Activated CD4-positive, alpha-beta T cell treated with anti-CD3 and anti-CD28 coated beads, Interleukin-2, amount 10 ng/mL, durations not matched to agents 24 days and 14 days (primary cell): ENCODE measurements at regions of chr5 and their contacts with region 1.

Region 1: DNA sequence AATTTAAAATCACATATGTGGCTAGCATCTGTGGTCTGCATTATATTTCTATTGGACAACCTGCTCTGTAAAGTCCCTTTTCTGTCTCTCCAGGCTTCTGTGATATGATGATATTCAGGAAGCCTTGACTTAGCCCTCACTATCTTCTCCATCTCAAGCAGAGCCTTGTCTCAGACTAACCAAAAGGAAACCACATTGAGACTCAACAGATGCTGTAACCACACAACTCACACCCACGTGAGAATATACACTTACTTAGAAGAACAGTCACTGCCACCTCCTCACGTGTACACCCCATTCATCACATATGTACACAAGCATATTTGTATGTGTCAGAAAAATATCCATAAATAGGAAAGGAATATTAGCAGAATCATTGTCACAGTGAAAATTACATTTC is 33.6 kb downstream of the HTR4 start:
- DNase-seq: peak; percentile 81
- H3K4me3 Mint-ChIP-seq: peak overlapping the region; percentile 10
- H3K27ac Mint-ChIP-seq: peak overlapping the region; percentile 55
- H3K4me1 Mint-ChIP-seq: peaks cover 25% of the 10 kb centered on the region
- H3K27me3 Mint-ChIP-seq: peaks cover 36% of the 10 kb centered on the region

Region 2: GRCh38 chr5:147658293-147658932 is 962.3 kb before region 1 on chr5:
- intact Hi-C with region 1: no loop called
- DNase-seq: no peak
- H3K4me3 Mint-ChIP-seq: no peak overlapping the region
- H3K27ac Mint-ChIP-seq: no peak overlapping the region
- H3K4me1 Mint-ChIP-seq: no peaks in the 10 kb centered on the region
- H3K27me3 Mint-ChIP-seq: no peaks in the 10 kb centered on the region

Region 3: GRCh38 chr5:148186248-148186996 is 434.3 kb before region 1 on chr5:
- intact Hi-C with region 1: loop called (anchors 2 kb)
- DNase-seq: peak; percentile 61
- H3K4me3 Mint-ChIP-seq: no peak overlapping the region
- H3K27ac Mint-ChIP-seq: no peak overlapping the region
- H3K4me1 Mint-ChIP-seq: peaks cover 6% of the 10 kb centered on the region
- H3K27me3 Mint-ChIP-seq: peaks cover 8% of the 10 kb centered on the region

Region 4: GRCh38 chr5:148343046-148343408 is 277.7 kb before region 1 on chr5:
- intact Hi-C with region 1: no loop called
- DNase-seq: no peak
- H3K4me3 Mint-ChIP-seq: no peak overlapping the region
- H3K27ac Mint-ChIP-seq: no peak overlapping the region
- H3K4me1 Mint-ChIP-seq: no peaks in the 10 kb centered on the region
- H3K27me3 Mint-ChIP-seq: no peaks in the 10 kb centered on the region

Region 5: DNA sequence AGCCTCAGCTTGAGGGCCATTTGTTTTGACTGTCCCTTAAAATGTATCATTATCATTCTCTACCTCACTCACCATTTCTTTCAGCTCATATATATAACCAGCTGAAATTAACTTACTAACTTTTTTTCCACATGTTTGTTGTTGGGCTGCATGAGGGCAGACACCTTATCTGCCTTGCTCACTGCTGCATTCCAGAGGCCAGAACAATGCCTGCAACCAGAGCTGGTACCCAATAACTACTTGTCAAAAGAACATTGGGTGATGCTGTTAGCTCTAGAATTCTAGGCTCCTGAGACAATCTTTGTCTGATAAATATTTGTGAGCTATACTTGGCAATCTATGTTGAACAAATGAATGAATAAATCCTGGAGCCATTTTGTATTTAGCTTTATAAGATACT is 34.7 kb before region 1 on chr5:
- intact Hi-C with region 1: no loop called
- DNase-seq: peak; percentile 12
- H3K4me3 Mint-ChIP-seq: no peak overlapping the region
- H3K27ac Mint-ChIP-seq: no peak overlapping the region
- H3K4me1 Mint-ChIP-seq: no peaks in the 10 kb centered on the region
- H3K27me3 Mint-ChIP-seq: peaks cover 2% of the 10 kb centered on the region

Region 6: GRCh38 chr5:149240354-149240998 is 619.8 kb after region 1 on chr5:
- intact Hi-C with region 1: no loop called
- DNase-seq: peak; percentile 92
- H3K4me3 Mint-ChIP-seq: peak overlapping the region; percentile 10
- H3K27ac Mint-ChIP-seq: peak overlapping the region; percentile 79
- H3K4me1 Mint-ChIP-seq: peaks cover 13% of the 10 kb centered on the region
- H3K27me3 Mint-ChIP-seq: peaks cover 17% of the 10 kb centered on the region